Left cardiac atrium (tissue), 4 donors: ENCODE measurements at regions of chr1 and their contacts with region 1.

Region 1: DNA sequence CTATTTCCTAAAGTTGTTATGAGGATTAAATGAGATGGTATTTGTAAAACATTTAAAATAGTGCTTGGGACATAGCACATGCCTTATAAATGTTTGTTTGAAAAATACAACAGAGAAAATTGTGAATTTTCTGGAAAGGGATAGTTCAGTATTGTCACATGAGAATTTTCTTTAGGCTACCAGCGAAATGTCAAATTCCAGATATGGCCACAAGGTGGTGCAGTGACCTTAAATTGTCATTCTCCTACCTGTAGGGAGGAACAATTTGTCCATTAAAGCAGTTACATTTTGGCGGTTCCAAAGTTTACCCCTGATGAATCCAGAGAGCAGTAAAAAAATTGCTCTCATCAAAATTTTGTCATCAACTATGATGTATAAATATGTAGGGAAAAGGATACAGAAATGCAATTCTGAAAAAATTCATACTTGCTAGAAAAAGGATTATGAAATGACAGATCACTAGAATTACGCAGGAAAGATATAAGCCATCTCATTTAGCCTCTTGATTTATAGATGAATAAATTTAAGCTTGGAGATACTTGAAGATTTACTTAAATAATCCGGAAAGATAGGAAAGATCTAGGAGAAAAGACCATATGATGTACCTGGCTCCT is 50.2 kb upstream of the TSHB start:
- DNase-seq: peak; percentile 31
- ATAC-seq: no peak

Region 2: DNA sequence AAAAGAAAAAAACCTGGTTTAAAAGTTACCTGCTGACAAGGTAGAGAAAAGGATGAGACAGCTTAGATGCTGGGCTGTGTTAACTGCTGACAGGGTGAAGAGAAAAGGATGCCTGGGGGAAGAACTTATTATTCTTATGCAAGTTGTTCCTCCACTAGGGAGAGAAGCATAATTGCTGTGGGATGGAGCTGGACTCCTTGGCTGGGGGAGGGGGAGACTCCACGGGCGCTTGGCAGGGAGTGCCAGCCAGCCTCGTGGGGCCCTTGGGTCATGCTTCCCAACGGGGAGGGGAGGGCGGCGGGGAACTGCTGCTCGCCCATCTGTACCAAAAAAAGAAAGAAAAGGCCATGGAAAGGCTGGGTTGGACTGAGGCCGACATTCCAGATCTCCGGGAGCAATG is 77.6 kb before region 1 on chr1:
- intact Hi-C with region 1: no loop called
- DNase-seq: peak; percentile 19
- ATAC-seq: peak in 1 of 2 donors; percentile 91

Region 3: GRCh38 chr1:114956564-114956963 is 22.8 kb before region 1 on chr1:
- intact Hi-C with region 1: no loop called
- DNase-seq: no peak
- ATAC-seq: peak in 1 of 2 donors; percentile 30

Region 4: GRCh38 chr1:115052454-115053083 is 73.2 kb after region 1 on chr1:
- intact Hi-C with region 1: loop called in 1 of 2 experiments (anchors 10 kb)
- DNase-seq: peak; percentile 45
- ATAC-seq: peak; percentile 65 to 76

Region 5: GRCh38 chr1:115112496-115113375 is 133.4 kb after region 1 on chr1:
- intact Hi-C with region 1: loop called (anchors 1 to 2 kb)
- DNase-seq: no peak
- ATAC-seq: peak; percentile 44 to 50

Region 6: GRCh38 chr1:115793162-115793561 is 813.8 kb after region 1 on chr1:
- intact Hi-C with region 1: no loop called
- DNase-seq: no peak
- ATAC-seq: peak in 1 of 2 donors; percentile 56